A673 (cell line): ENCODE measurements at regions of chr4 and their contacts with region 1.

Region 1: DNA sequence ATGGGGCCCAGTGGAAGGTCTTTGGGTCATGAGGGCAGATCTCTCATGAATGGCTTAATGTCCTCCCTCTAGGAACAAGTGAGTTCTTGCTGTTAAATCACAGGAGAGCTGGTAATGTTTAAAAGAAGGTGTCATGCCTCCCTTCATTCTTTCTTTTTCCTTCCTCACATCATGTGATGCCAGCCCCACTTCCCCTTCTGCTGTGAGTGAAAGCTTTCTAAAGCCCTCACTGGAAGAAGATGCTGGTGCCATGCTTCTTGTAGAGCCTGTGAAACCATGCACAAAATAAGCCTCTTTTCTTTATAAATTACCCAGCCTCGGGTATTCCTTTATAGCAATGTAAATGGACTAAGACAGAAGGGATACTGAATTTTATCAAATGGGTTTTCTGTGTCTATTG is 66.1 kb upstream of the ZNF827 start:
- DNase-seq: no peak
- H3K4me3 ChIP-seq: no peak overlapping the region
- H3K27ac ChIP-seq: no peak overlapping the region
- H3K4me1 ChIP-seq: no peaks in the 10 kb centered on the region
- H3K27me3 ChIP-seq: no peaks in the 10 kb centered on the region
- CTCF ChIP-seq: no peak

Region 2: GRCh38 chr4:145988628-145989027 is 16.1 kb before region 1 on chr4:
- CTCF ChIA-PET with region 1: no interaction called
- POLR2A ChIA-PET with region 1: interaction called, 13 read pairs
- intact Hi-C with region 1: no loop called
- DNase-seq: no peak
- H3K4me3 ChIP-seq: no peak overlapping the region
- H3K27ac ChIP-seq: no peak overlapping the region
- H3K4me1 ChIP-seq: no peaks in the 10 kb centered on the region
- H3K27me3 ChIP-seq: no peaks in the 10 kb centered on the region
- CTCF ChIP-seq: no peak

Region 3: DNA sequence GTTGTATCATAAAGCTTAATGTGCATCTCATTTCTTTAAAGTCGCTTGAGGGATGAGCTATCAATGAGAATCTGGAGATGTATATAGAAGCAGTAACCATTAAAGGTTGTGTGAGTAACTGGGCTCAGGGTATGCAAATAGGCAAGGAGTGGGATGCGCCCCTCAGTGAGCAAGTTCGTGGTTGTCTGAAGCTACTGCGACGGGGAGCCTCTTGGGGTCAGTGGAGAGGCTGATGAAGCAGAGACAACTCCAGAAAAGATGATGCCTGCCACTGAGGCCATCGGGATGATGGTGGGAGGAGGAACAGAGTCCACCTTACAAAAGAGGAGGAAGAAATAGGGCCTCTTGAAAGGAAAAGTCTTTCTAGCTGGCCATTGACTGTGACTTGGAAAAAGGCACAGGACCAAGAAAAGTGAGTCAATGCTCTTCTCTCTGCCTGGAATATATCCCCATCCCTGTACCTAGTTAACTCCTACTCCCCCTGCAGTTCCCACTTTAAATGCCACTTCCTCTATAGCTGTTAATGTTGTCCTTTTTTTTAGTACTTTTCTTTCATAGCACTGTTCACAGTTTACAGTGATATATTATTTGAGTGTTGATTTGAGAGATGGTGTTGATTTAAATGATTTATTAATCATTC is 119.4 kb after region 1 on chr4:
- CTCF ChIA-PET with region 1: no interaction called
- POLR2A ChIA-PET with region 1: no interaction called
- intact Hi-C with region 1: no loop called
- DNase-seq: peak; percentile 9
- H3K4me3 ChIP-seq: no peak overlapping the region
- H3K27ac ChIP-seq: no peak overlapping the region
- H3K4me1 ChIP-seq: no peaks in the 10 kb centered on the region
- H3K27me3 ChIP-seq: no peaks in the 10 kb centered on the region
- CTCF ChIP-seq: no peak; the same call in 1 of the 2 replicates